ENCODE measurements at regions of chr5 and their contacts with region 1.

Region 1: GRCh38 chr5:111757355-111758283 is 625 bp upstream of the NREP start:
- DNase-seq: peak; percentile 73 to 95
- H3K4me3 ChIP-seq: peak overlapping the region; percentile 50 to 72
- H3K27ac ChIP-seq: peak overlapping the region; percentile 59 to 76
- H3K4me1 ChIP-seq: peaks cover 0 to 14% of the 10 kb centered on the region in 2 donors
- H3K27me3 ChIP-seq: no peaks in the 10 kb centered on the region
- CTCF ChIP-seq: peak; percentile 28 to 46 (median 33)

Region 2: DNA sequence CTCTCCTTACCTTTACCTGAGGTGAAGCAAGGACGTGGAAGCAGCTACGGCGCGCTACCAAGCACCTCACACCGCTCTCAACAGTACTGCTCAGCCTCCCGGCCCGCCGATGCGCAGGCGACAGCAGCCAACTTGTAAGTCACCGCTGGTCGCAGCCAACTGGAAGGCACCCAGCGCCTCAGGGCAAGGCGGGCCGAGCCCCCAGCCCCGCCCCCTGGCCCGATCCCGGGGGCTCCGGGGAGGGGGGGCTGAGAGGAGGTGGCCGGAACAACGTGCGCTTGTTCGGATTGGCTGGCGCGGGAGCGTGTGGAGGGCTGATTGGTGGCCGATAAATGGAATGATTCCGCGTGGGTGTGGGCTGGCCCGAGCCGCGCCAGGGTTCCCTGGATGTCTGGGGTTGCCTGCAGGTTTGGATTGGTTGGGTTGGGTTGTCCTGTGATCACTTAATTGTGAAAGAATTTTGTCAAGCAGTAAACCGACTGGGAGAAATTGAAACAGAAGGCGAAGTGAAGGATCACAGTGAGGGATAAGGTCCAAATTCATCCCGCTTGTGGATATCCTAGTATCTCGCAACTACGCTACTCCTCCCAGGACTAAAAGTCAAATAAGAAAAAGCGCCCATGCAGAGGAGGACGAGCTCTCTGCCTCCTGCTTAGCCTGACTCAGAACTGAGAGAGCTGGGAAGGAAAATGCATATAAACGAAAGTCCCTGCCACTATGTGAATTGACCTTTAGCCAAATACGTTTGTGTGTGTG is 245.1 kb before region 1 on chr5 and contains the start of gene STARD4:
- intact Hi-C with region 1: loop called (anchors 5 kb)
- DNase-seq: peak; percentile 90 to 98
- H3K4me3 ChIP-seq: peak within 1 kb of the TSS; percentile 89 to 90
- H3K27ac ChIP-seq: peak within 1 kb of the TSS; percentile 86 to 89
- H3K4me1 ChIP-seq: peaks cover 0 to 2% of the 10 kb centered on the region in 2 donors
- H3K27me3 ChIP-seq: no peaks in the 10 kb centered on the region
- CTCF ChIP-seq: no peak
- total RNA-seq, gene STARD4: 1.5 TPM

Region 3: DNA sequence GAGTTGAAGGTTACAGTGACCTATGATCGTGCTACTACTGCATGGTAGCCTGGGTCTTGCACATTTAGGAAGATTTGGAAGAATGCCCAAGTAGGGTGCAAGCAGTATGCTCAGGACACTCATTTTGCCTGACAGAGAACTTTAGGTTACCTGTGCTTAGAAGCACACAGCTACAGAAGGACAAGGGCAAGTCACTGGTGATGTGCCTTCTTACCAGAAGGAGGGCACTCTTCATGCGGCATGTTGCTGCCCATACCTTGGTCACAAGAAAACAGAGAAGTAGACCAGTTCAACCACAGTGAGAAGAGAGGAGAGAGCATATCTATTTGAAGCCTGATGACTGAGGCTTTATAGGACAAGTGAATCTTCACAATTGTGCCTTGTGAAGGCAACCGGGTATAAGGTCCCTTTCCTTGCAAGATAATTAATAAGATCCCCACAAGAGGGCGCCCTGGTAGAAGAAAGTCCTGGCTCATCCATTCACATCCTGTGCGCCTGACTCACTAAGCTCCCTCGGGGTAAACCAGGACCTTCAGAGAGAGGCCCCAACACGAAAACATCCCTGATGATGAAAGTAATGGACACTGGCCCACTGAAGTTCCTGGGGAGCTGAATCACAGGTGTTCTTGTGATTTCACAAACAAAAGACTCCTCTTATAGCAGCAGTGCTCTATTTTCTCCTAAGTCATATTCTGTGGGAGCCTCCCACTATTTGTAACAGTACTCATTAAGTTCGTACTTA is 207.2 kb before region 1 on chr5:
- intact Hi-C with region 1: loop called (anchors 5 kb)
- DNase-seq: peak; percentile 48 to 95
- H3K4me3 ChIP-seq: no peak overlapping the region
- H3K27ac ChIP-seq: no peak overlapping the region
- H3K4me1 ChIP-seq: peaks cover 0 to 4% of the 10 kb centered on the region in 2 donors
- H3K27me3 ChIP-seq: no peaks in the 10 kb centered on the region
- CTCF ChIP-seq: peak; percentile 53 to 76 (median 75)

Region 4: GRCh38 chr5:111655169-111655924 is 102.3 kb before region 1 on chr5:
- intact Hi-C with region 1: loop called (anchors 2 kb)
- DNase-seq: peak in 1 of 2 donors; percentile 69
- H3K4me3 ChIP-seq: no peak overlapping the region
- H3K27ac ChIP-seq: peak overlapping the region in 1 of 2 donors; percentile 49
- H3K4me1 ChIP-seq: peaks cover 0 to 5% of the 10 kb centered on the region in 2 donors
- H3K27me3 ChIP-seq: no peaks in the 10 kb centered on the region
- CTCF ChIP-seq: no peak

Region 5: DNA sequence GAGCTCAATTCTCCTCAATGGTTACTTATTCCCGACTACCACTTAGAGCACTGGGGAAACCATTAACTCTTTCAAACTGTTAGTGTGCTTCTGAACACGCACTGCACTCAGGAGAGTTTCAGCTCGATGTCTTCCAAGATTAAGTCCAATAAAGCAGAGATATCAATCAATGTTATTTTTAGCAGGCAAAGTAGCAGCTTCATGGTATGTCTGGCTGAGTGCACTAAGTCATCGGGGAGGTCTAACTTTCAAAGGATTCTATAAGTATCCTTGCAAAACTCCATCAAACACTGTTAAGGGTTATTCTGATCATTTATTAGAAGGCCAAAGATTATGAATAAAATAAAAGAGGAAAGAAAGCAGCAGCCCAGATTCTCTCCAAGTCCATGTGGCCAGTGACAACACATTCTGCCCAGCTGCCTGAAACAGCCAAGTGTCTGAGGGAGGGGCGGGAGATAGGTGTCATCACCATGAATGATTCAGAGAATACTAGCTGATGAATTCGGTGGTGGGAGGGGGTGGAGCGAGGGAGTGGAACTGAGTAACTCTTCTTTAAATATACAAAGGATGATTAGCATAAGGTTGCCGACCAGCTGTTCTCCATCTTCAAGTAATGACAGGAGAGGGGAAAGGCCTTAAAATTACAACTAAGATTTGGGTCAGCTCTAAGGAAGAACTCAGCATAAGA is 21.9 kb before region 1 on chr5:
- intact Hi-C with region 1: loop called (anchors 2 kb)
- DNase-seq: no peak
- H3K4me3 ChIP-seq: no peak overlapping the region
- H3K27ac ChIP-seq: no peak overlapping the region
- H3K4me1 ChIP-seq: peaks cover 0 to 21% of the 10 kb centered on the region in 2 donors
- H3K27me3 ChIP-seq: no peaks in the 10 kb centered on the region
- CTCF ChIP-seq: no peak

Region 6: GRCh38 chr5:111800356-111800755 is 42.7 kb after region 1 on chr5:
- intact Hi-C with region 1: no loop called
- DNase-seq: no peak
- H3K4me3 ChIP-seq: no peak overlapping the region
- H3K27ac ChIP-seq: no peak overlapping the region
- H3K4me1 ChIP-seq: no peaks in the 10 kb centered on the region
- H3K27me3 ChIP-seq: no peaks in the 10 kb centered on the region
- CTCF ChIP-seq: no peak

Measured in ascending aorta (tissue), 2 donors.